Colonic mucosa (tissue), 4 donors: ENCODE measurements at regions of chr9 and their contacts with region 1.

Region 1: GRCh38 chr9:23693374-23693773 is 132.7 kb downstream of the ELAVL2 start:
- DNase-seq: no peak
- H3K4me3 ChIP-seq: no peak overlapping the region
- H3K27ac ChIP-seq: no peak overlapping the region
- H3K4me1 ChIP-seq: no peaks in the 10 kb centered on the region
- H3K27me3 ChIP-seq: no peaks in the 10 kb centered on the region
- CTCF ChIP-seq: no peak

Region 2: GRCh38 chr9:23394189-23394588 is 299.2 kb before region 1 on chr9:
- intact Hi-C with region 1: no loop called
- DNase-seq: no peak
- H3K4me3 ChIP-seq: no peak overlapping the region
- H3K27ac ChIP-seq: no peak overlapping the region
- H3K4me1 ChIP-seq: no peaks in the 10 kb centered on the region
- H3K27me3 ChIP-seq: no peaks in the 10 kb centered on the region
- CTCF ChIP-seq: no peak

Region 3: GRCh38 chr9:23643656-23644258 is 49.6 kb before region 1 on chr9:
- intact Hi-C with region 1: loop called (anchors 10 kb)
- DNase-seq: no peak
- H3K4me3 ChIP-seq: no peak overlapping the region
- H3K27ac ChIP-seq: no peak overlapping the region
- H3K4me1 ChIP-seq: no peaks in the 10 kb centered on the region
- H3K27me3 ChIP-seq: no peaks in the 10 kb centered on the region
- CTCF ChIP-seq: no peak

Region 4: DNA sequence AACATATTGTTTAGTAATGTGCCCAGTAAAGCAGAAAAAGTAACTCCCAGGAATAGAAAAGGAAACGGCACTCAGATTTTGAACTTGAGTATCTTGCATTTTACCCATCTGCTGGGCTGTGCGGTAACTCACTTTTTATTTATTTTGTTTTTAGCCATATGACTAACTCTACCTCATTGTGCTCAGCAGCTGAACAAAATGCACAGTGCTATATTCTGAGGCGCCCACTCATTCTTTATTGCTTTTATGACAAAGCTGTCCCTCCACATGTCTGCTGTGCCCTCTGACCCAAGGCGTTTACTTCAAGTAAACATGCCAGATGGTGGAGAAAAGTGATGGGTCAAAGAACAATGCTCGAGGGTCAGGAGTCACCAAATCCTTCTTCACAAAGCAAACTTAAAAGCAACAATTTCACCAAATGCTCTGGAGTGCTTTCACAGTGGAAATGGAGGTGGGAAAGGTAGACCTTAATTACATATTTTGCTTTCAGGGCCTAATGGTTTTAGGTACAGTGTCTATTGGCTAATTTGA is 347.9 kb after region 1 on chr9:
- intact Hi-C with region 1: no loop called
- DNase-seq: no peak
- H3K4me3 ChIP-seq: no peak overlapping the region
- H3K27ac ChIP-seq: no peak overlapping the region
- H3K4me1 ChIP-seq: no peaks in the 10 kb centered on the region
- H3K27me3 ChIP-seq: no peaks in the 10 kb centered on the region
- CTCF ChIP-seq: no peak

Region 5: GRCh38 chr9:24051587-24051986 is 358.2 kb after region 1 on chr9:
- intact Hi-C with region 1: no loop called
- DNase-seq: no peak
- H3K4me3 ChIP-seq: no peak overlapping the region
- H3K27ac ChIP-seq: no peak overlapping the region
- H3K4me1 ChIP-seq: no peaks in the 10 kb centered on the region
- H3K27me3 ChIP-seq: no peaks in the 10 kb centered on the region
- CTCF ChIP-seq: no peak